Activated naive CD4-positive, alpha-beta T cell treated with anti-CD3 and anti-CD28 coated beads for 36 hours (primary cell): ENCODE measurements at regions of chr11 and their contacts with region 1.

Region 1: DNA sequence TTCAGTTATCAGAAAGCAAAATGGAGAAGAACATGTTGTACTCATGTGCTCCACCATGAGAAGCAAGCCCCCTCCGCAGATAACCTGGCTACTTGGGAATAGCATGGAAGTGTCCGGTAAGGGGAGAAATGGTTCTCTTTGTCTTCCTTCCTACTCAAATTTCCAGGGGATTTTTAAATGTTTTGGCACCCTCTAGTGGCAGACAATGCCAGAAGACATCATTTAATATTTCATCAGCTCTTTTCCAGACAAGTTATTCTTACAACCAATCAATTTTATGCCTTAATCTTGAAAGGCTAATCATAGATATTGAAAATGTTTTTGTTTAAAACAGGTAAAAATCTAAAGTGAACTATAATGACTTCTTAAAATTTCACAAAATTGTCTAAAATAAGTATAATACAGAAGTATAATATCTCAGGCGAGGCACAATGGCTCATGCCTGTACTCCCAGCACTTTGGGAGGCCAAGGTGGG is 15.7 kb downstream of the CRTAM start:
- DNase-seq: peak; percentile 74
- H3K4me3 Mint-ChIP-seq: no peak overlapping the region
- H3K27ac Mint-ChIP-seq: no peak overlapping the region
- H3K4me1 Mint-ChIP-seq: peaks cover 47% of the 10 kb centered on the region
- H3K27me3 Mint-ChIP-seq: no peaks in the 10 kb centered on the region

Region 2: GRCh38 chr11:122628810-122629555 is 225.0 kb before region 1 on chr11:
- CTCF ChIA-PET with region 1: interaction called, 43 read pairs
- intact Hi-C with region 1: loop called (anchors 1 kb)
- DNase-seq: peak; percentile 79
- H3K4me3 Mint-ChIP-seq: no peak overlapping the region
- H3K27ac Mint-ChIP-seq: no peak overlapping the region
- H3K4me1 Mint-ChIP-seq: peaks cover 13% of the 10 kb centered on the region
- H3K27me3 Mint-ChIP-seq: no peaks in the 10 kb centered on the region

Region 3: GRCh38 chr11:122697636-122698167 is 156.3 kb before region 1 on chr11:
- CTCF ChIA-PET with region 1: interaction called, 5 read pairs
- intact Hi-C with region 1: loop called (anchors 5 kb)
- DNase-seq: peak; percentile 77
- H3K4me3 Mint-ChIP-seq: peak overlapping the region; percentile 50
- H3K27ac Mint-ChIP-seq: peak overlapping the region; percentile 78
- H3K4me1 Mint-ChIP-seq: peaks cover 77% of the 10 kb centered on the region
- H3K27me3 Mint-ChIP-seq: no peaks in the 10 kb centered on the region

Region 4: GRCh38 chr11:122796128-122796717 is 57.8 kb before region 1 on chr11:
- CTCF ChIA-PET with region 1: interaction called, 289 read pairs
- intact Hi-C with region 1: loop called (anchors 1 kb)
- DNase-seq: peak; percentile 84
- H3K4me3 Mint-ChIP-seq: no peak overlapping the region
- H3K27ac Mint-ChIP-seq: no peak overlapping the region
- H3K4me1 Mint-ChIP-seq: peaks cover 2% of the 10 kb centered on the region
- H3K27me3 Mint-ChIP-seq: no peaks in the 10 kb centered on the region

Region 5: DNA sequence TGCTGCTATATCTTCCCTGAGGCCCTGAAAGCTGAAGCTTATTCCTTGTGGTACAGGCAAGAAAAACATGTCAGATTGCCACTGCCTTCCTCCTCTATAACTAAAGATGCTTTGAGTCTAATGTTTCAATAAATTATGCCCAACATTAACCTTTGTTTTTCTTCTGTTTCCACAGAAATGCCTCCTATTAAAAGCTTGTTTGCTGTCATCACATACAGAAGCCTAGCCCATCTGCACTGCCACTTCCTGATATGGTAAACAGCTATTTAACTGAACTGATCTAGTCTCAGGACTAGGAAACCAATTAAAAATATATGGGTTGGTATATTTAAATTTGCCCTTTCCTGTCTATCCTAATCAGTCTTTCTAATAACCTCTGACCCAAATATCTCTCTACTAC is 32.8 kb before region 1 on chr11:
- CTCF ChIA-PET with region 1: interaction called, 63 read pairs
- intact Hi-C with region 1: no loop called
- DNase-seq: no peak
- H3K4me3 Mint-ChIP-seq: no peak overlapping the region
- H3K27ac Mint-ChIP-seq: no peak overlapping the region
- H3K4me1 Mint-ChIP-seq: peaks cover 2% of the 10 kb centered on the region
- H3K27me3 Mint-ChIP-seq: no peaks in the 10 kb centered on the region

Region 6: DNA sequence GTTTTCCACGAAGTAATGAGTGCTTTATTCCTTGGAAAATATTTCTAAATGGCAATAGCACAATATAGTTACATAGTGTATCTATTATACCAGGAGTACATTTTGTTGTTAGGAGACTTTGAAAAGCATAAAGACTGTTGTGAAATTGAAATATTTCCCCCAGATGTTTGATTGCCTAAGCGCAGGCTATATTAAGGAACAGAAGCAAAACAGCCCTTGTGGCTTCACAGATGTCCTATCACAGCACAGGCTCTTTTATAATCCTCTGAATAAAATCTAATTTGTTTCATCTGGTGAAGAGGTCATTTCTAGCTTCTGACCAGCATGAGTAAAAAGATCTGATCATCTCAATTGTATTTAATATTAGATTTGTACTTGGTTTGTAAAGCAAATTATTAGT is 79.4 kb after region 1 on chr11:
- CTCF ChIA-PET with region 1: no interaction called
- intact Hi-C with region 1: no loop called
- DNase-seq: no peak
- H3K4me3 Mint-ChIP-seq: no peak overlapping the region
- H3K27ac Mint-ChIP-seq: no peak overlapping the region
- H3K4me1 Mint-ChIP-seq: no peaks in the 10 kb centered on the region
- H3K27me3 Mint-ChIP-seq: no peaks in the 10 kb centered on the region

Region 7: DNA sequence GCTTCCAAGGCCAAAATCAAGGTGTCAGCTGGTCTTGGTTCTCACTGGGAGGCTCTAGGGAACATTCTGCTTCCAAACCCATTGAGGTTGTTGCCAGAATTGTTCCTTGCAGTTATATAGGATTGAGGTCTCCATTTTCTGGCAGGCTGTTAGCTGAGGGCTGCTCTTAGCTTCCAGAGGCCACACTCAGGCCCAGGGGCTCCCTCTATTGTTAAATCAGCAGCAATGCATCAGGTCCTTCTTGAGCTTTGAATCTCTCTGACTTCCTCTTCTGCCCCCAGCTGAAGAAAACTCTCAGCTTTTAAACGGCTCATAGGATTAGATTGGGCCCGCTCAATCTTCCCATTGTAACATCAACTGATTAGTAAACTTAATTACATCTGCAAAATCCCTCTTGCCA is 167.0 kb after region 1 on chr11:
- CTCF ChIA-PET with region 1: interaction called, 193 read pairs
- intact Hi-C with region 1: no loop called
- DNase-seq: peak; percentile 47
- H3K4me3 Mint-ChIP-seq: no peak overlapping the region
- H3K27ac Mint-ChIP-seq: no peak overlapping the region
- H3K4me1 Mint-ChIP-seq: peaks cover 6% of the 10 kb centered on the region
- H3K27me3 Mint-ChIP-seq: no peaks in the 10 kb centered on the region